ENCODE measurements at regions of chr18 and their contacts with region 1.

Region 1: GRCh38 chr18:49486953-49487710 is at the start of gene C18orf32:
- DNase-seq: peak; percentile 84 to 93 (median 92)
- ATAC-seq: peak; percentile 94
- H3K4me3 ChIP-seq: peak within 1 kb of the TSS; percentile 95
- H3K4me3 Mint-ChIP-seq: peak within 1 kb of the TSS; percentile 77 to 98 (median 94)
- H3K27ac ChIP-seq: peak within 1 kb of the TSS; percentile 95
- H3K27ac Mint-ChIP-seq: peak within 1 kb of the TSS; percentile 90 to 98 (median 96)
- H3K4me1 ChIP-seq: peaks cover 34 to 39% of the 10 kb centered on the region in 2 donors
- H3K4me1 Mint-ChIP-seq: peaks cover 40 to 83% (median 70%) of the 10 kb centered on the region in 7 donors
- H3K27me3 ChIP-seq: no peaks in the 10 kb centered on the region
- H3K27me3 Mint-ChIP-seq: no peaks in the 10 kb centered on the region
- total RNA-seq, gene C18orf32: 22.5 to 53.6 (median 31.5) TPM

Region 2: DNA sequence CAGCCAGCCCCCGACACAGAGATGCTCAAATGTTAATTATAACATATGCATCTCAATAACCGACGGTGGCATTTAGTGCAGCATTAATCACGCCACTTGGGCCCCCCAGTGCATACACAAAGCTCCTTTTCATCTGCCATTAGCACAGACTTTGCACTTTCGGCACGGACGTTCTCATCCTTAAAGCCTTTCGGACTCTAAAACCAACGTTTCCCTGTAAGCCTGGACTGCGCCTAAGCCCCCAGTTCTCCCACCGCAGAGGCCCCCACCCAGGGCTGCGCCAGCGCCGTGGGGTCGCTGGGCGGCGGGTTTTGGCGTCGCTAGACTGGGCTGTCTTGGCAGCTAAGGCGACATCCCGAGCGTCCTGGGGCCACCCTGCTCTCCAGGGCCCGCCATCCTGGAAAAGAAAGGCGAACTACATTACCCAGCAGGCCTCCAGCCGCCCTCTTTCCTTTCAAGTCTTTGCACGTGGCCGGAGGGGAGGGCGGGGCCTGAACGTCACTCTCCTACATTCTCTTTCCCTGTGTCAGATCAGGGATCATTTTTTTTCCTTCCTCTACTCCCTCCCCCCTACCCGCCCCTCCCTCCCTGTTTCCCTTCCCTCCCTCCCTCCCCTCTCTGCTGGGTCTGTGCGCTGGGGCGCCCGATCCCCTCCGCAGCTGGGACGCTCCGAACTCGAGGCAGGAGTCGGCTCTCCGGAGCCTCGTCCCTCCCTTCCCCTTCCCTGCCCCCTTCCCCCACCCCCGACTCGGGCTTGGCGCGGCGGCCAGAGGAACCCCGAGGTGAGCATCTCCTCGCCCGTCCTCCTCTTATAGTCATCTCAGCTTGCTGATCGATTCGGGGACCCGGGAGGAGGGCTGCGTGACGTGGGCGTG is 948.4 kb before region 1 on chr18 and contains the start of gene CTIF:
- CTCF ChIA-PET with region 1: no interaction called
- POLR2A ChIA-PET with region 1: no interaction called
- intact Hi-C with region 1: loop called in 1 of 2 experiments (anchors 2 kb)
- DNase-seq: peak; percentile 17 to 71 (median 37)
- ATAC-seq: peak; percentile 78
- H3K4me3 ChIP-seq: peak within 1 kb of the TSS; percentile 75
- H3K4me3 Mint-ChIP-seq: peak within 1 kb of the TSS; percentile 73 to 95 (median 88)
- H3K27ac ChIP-seq: peak within 1 kb of the TSS; percentile 19
- H3K27ac Mint-ChIP-seq: peak within 1 kb of the TSS in 1 of 9 donors; percentile 46
- H3K4me1 ChIP-seq: peaks cover 0 to 5% of the 10 kb centered on the region in 2 donors
- H3K4me1 Mint-ChIP-seq: peaks cover 0 to 17% (median 0%) of the 10 kb centered on the region in 7 donors
- H3K27me3 ChIP-seq: no peaks in the 10 kb centered on the region
- H3K27me3 Mint-ChIP-seq: peaks cover 1 to 31% (median 6%) of the 10 kb centered on the region in 5 donors
- total RNA-seq, gene CTIF: 1.3 to 11.2 (median 2.5) TPM

Region 3: DNA sequence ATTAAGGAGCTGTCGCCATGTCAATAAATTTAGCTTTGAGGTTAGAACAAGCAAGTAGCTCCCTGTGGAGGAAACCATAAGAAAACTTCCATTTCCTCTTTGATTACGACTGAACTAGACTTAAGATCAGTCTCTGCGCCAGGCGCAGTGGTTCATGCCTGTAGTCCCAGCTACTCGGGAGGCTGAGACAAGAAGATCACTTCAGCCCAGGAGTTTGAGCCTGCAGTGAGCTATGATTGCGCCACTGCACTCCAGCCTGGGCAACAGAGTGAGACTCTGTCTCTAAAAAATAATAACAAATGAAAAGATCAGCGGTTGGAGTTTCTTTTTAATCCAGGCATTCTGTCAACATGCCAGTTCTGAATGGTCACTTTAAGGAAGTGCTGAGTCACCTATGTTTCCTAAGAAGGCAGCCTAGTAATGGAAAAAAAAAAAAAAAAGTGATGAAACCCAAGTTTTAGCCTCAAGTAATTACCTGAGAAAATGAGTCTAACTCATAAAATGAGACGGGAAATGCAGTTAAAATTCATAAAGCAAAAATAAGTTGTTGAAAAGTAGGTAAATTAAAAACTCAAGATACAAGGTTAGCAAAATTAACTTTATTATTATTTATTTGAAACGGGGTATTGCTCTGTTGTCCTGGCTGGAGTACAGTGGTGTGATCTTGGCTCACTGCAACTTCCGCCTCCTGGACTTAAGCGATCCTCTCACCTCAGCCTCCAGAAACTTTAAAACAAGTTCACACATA is 10.3 kb before region 1 on chr18:
- CTCF ChIA-PET with region 1: no interaction called
- POLR2A ChIA-PET with region 1: interaction called, 10 read pairs
- intact Hi-C with region 1: no loop called
- DNase-seq: no peak
- ATAC-seq: peak; percentile 41
- H3K4me3 ChIP-seq: no peak overlapping the region
- H3K4me3 Mint-ChIP-seq: no peak overlapping the region
- H3K27ac ChIP-seq: no peak overlapping the region
- H3K27ac Mint-ChIP-seq: peak overlapping the region in 6 of 9 donors; percentile 36 to 63 (median 57)
- H3K4me1 ChIP-seq: no peaks in the 10 kb centered on the region
- H3K4me1 Mint-ChIP-seq: peaks cover 7 to 20% (median 14%) of the 10 kb centered on the region in 7 donors
- H3K27me3 ChIP-seq: no peaks in the 10 kb centered on the region
- H3K27me3 Mint-ChIP-seq: no peaks in the 10 kb centered on the region

Region 4: DNA sequence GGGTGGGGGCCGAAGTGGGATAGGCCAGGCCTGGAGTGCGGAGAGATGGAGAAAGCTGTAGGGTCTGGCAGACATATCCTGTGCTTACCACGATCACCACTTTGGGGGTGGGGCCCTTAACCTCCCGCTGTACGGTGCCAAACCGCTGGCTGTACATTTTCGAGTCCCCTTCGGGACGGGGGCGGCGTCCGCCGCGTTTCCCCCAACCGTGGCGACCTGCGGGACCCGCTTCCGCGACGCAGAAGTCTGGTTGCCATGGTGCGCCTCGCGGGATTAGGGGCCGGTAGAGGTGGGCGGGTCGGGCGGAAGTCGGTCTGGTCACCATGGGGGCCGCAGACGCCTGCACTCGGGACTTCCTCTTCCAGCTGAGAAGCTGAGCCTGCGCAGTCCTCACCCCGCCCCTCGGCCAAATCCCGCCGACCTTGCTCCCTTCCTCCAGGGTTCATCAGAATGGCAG is 779.1 kb after region 1 on chr18 and contains the start of gene CFAP53:
- CTCF ChIA-PET with region 1: no interaction called
- POLR2A ChIA-PET with region 1: no interaction called
- intact Hi-C with region 1: loop called (anchors 1 to 5 kb)
- DNase-seq: peak; percentile 51 to 83 (median 69)
- ATAC-seq: peak; percentile 88
- H3K4me3 ChIP-seq: peak within 1 kb of the TSS; percentile 59
- H3K4me3 Mint-ChIP-seq: peak within 1 kb of the TSS; percentile 79 to 94 (median 90)
- H3K27ac ChIP-seq: peak within 1 kb of the TSS; percentile 50
- H3K27ac Mint-ChIP-seq: peak within 1 kb of the TSS; percentile 57 to 92 (median 81)
- H3K4me1 ChIP-seq: peaks cover 4 to 5% of the 10 kb centered on the region in 2 donors
- H3K4me1 Mint-ChIP-seq: peaks cover 9 to 29% (median 25%) of the 10 kb centered on the region in 7 donors
- H3K27me3 ChIP-seq: no peaks in the 10 kb centered on the region
- H3K27me3 Mint-ChIP-seq: peaks cover 0 to 17% (median 0%) of the 10 kb centered on the region in 5 donors
- total RNA-seq, gene CFAP53: 0.19 to 1.8 (median 0.64) TPM

Region 5: DNA sequence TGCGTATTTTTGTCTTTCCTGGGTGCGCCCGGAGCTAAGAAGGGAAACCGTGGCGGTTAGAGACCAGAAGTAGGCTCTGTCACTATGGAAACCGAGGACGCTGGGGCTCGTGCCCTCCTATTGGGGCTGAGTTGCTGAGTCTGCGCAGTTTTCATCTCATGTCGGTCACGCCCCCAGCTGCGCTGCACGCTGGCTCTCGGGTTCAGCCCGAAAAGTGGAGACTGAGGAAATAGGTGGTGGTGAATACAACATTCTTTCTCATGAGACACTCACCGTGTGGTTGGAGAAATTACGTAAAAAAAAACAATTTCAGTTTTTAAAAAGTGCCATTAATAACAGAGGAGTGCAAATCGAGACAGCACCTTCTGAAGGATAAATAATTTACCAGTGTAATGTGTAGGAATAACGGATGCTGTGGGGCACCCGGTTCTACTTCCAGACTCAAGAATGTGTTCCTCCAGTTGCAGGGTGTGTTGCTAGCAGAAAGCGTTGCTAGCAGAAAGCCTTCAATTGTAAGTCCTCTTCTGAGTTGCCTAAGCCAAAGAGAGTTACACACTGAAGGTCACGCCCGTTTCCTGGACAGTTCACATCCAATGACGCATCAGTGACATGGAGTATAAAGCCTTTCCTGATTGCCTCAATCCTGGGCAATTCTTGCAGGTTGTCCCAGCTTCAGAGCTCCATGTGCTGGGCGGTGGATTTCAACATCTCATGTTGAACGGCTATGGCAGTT is 820.8 kb after region 1 on chr18:
- CTCF ChIA-PET with region 1: no interaction called
- POLR2A ChIA-PET with region 1: no interaction called
- intact Hi-C with region 1: loop called in 1 of 2 experiments (anchors 1 kb)
- DNase-seq: peak; percentile 70 to 93 (median 89)
- ATAC-seq: peak; percentile 96
- H3K4me3 ChIP-seq: peak overlapping the region; percentile 45
- H3K4me3 Mint-ChIP-seq: peak overlapping the region; percentile 76 to 97 (median 92)
- H3K27ac ChIP-seq: peak overlapping the region; percentile 65
- H3K27ac Mint-ChIP-seq: peak overlapping the region; percentile 52 to 93 (median 82)
- H3K4me1 ChIP-seq: peaks cover 0 to 8% of the 10 kb centered on the region in 2 donors
- H3K4me1 Mint-ChIP-seq: peaks cover 0 to 20% (median 16%) of the 10 kb centered on the region in 7 donors
- H3K27me3 ChIP-seq: peaks cover 0 to 3% of the 10 kb centered on the region in 2 donors
- H3K27me3 Mint-ChIP-seq: peaks cover 0 to 35% (median 19%) of the 10 kb centered on the region in 5 donors

Region 6: GRCh38 chr18:50878345-50879301 is 1391.5 kb after region 1 on chr18 and contains the start of gene ME2:
- CTCF ChIA-PET with region 1: no interaction called
- POLR2A ChIA-PET with region 1: interaction called, 3 read pairs
- intact Hi-C with region 1: loop called in 1 of 2 experiments (anchors 2 kb)
- DNase-seq: peak; percentile 82 to 95 (median 89)
- ATAC-seq: peak; percentile 94
- H3K4me3 ChIP-seq: peak within 1 kb of the TSS; percentile 61
- H3K4me3 Mint-ChIP-seq: peak within 1 kb of the TSS; percentile 95 to 99 (median 97)
- H3K27ac ChIP-seq: peak within 1 kb of the TSS; percentile 98
- H3K27ac Mint-ChIP-seq: peak within 1 kb of the TSS; percentile 93 to 99 (median 98)
- H3K4me1 ChIP-seq: peaks cover 17% of the 10 kb centered on the region in 2 donors
- H3K4me1 Mint-ChIP-seq: peaks cover 18 to 37% (median 34%) of the 10 kb centered on the region in 7 donors
- H3K27me3 ChIP-seq: no peaks in the 10 kb centered on the region
- H3K27me3 Mint-ChIP-seq: peaks cover 0 to 11% (median 4%) of the 10 kb centered on the region in 5 donors
- total RNA-seq, gene ME2: 29.4 to 84.7 (median 43.2) TPM